Activated naive CD4-positive, alpha-beta T cell treated with anti-CD3 and anti-CD28 coated beads for 36 hours (primary cell): ENCODE measurements at regions of chr3 and their contacts with region 1.

Region 1: GRCh38 chr3:52238761-52239701 is at the start of gene TWF2:
- DNase-seq: peak; percentile 83
- H3K4me3 Mint-ChIP-seq: peak within 1 kb of the TSS; percentile 92
- H3K27ac Mint-ChIP-seq: peak within 1 kb of the TSS; percentile 98
- H3K4me1 Mint-ChIP-seq: peaks cover 75% of the 10 kb centered on the region
- H3K27me3 Mint-ChIP-seq: no peaks in the 10 kb centered on the region
- total RNA-seq, gene TWF2: 89.1 to 91.3 TPM

Region 2: DNA sequence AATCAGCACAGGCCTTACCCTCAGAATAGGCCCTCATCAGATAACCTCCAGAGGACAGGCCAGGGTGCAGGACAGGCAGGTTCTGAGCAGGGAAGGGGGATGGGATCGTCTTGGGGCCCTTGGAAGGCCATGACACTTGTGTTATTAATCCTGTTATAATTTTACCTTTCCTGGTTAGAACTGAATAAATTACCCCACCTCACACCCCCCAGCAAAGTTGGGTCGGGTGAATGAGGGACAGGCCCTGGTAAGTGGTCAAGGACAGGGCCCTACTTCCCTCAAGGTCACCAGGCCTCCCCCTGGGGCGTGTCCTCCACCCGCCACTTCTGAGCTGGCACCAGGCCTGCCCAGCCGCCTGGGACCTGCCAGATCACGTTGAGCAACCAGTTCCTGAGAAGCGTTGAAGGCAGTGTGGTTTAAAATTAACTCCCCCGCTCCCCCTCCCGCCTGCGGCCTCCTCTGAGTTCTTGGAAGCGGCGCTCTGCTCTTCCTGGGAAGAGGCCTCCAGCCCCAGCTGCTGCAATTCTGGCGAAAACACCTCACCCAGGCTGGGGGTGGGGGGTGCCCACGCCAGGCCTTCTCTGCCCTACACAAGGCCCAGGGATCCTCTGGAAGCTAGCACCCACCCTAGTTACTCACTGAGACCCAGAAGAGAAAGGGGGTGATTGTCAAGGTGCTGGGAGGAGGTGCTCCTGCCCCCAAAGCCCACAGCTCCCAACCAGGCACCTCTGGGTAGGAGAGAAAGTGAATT is 1638.0 kb before region 1 on chr3:
- CTCF ChIA-PET with region 1: no interaction called
- intact Hi-C with region 1: no loop called
- DNase-seq: peak; percentile 95
- H3K4me3 Mint-ChIP-seq: peak overlapping the region; percentile 68
- H3K27ac Mint-ChIP-seq: peak overlapping the region; percentile 100
- H3K4me1 Mint-ChIP-seq: peaks cover 74% of the 10 kb centered on the region
- H3K27me3 Mint-ChIP-seq: no peaks in the 10 kb centered on the region

Region 3: GRCh38 chr3:52197842-52198668 is 41.0 kb before region 1 on chr3 and contains the start of gene ALAS1:
- CTCF ChIA-PET with region 1: no interaction called
- intact Hi-C with region 1: loop called (anchors 1 kb)
- DNase-seq: peak; percentile 94
- H3K4me3 Mint-ChIP-seq: peak within 1 kb of the TSS; percentile 92
- H3K27ac Mint-ChIP-seq: peak within 1 kb of the TSS; percentile 84
- H3K4me1 Mint-ChIP-seq: peaks cover 56% of the 10 kb centered on the region
- H3K27me3 Mint-ChIP-seq: no peaks in the 10 kb centered on the region
- total RNA-seq, gene ALAS1: 35.7 to 37.8 TPM

Region 4: GRCh38 chr3:52253314-52254304 is 14.6 kb after region 1 on chr3:
- CTCF ChIA-PET with region 1: interaction called, 31 read pairs
- intact Hi-C with region 1: loop called (anchors 1 kb)
- DNase-seq: peak; percentile 89
- H3K4me3 Mint-ChIP-seq: peak overlapping the region; percentile 65
- H3K27ac Mint-ChIP-seq: peak overlapping the region; percentile 99
- H3K4me1 Mint-ChIP-seq: peaks cover 89% of the 10 kb centered on the region
- H3K27me3 Mint-ChIP-seq: no peaks in the 10 kb centered on the region